Heart left ventricle (tissue), 16 donors: ENCODE measurements at regions of chrX and their contacts with region 1.

Region 1: GRCh38 chrX:97563531-97564133 is 679.9 kb downstream of the RPA4 start:
- DNase-seq: peak in 4 of 5 donors; percentile 8 to 52 (median 27)
- ATAC-seq: peak in 3 of 4 donors; percentile 69 to 74 (median 69)
- H3K4me3 ChIP-seq: peak overlapping the region in 10 of 12 donors; percentile 7 to 48 (median 29)
- H3K27ac ChIP-seq: peak overlapping the region in 7 of 12 donors; percentile 4 to 77 (median 46)
- H3K4me1 ChIP-seq: peaks cover 0 to 13% (median 0%) of the 10 kb centered on the region in 12 donors
- H3K27me3 ChIP-seq: no peaks in the 10 kb centered on the region
- CTCF ChIP-seq: no peak
- POLR2A ChIP-seq: no peak

Region 2: DNA sequence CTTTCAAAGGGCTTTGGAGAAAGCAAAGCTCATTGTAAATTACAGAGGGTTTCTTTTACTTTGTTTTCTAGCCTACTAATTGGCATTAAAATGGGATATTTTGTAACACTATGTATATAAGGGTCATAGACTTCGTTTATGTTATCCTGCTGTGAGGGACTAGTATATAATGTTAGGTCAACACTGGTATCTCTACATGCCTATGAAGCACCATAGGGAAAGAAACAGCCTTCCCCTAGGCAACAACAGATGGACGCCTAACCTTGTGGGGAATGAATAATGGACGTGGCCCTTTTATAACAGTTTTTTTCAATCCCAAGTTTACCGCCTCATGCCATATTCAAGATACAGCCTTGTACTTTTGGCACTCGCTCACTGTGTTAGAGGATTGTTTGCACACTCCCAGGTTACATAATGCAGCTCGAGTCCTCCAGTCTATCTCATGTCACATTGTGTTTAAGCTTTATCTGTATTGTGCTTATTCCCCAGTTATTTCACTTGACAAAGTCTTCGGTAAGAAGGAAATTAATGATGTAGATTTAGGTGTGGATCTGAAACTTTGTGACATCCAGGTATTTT is 31.1 kb after region 1 on chrX:
- intact Hi-C with region 1: loop called in 1 of 10 experiments (anchors 1 kb)
- DNase-seq: no peak
- ATAC-seq: no peak
- H3K4me3 ChIP-seq: no peak overlapping the region
- H3K27ac ChIP-seq: no peak overlapping the region
- H3K4me1 ChIP-seq: no peaks in the 10 kb centered on the region
- H3K27me3 ChIP-seq: peaks cover 0 to 6% (median 0%) of the 10 kb centered on the region in 9 donors
- CTCF ChIP-seq: no peak
- POLR2A ChIP-seq: no peak